ENCODE measurements at regions of chr5 and their contacts with region 1.

Region 1: GRCh38 chr5:10695055-10695649 is 65.9 kb downstream of the DAP start:
- DNase-seq: peak; percentile 61 to 85 (median 76)
- H3K4me3 ChIP-seq: peak overlapping the region in 42 of 59 donors; percentile 6 to 56 (median 38)
- H3K27ac ChIP-seq: peak overlapping the region in 5 of 59 donors; percentile 7 to 55 (median 25)
- H3K27me3 ChIP-seq: no peaks in the 10 kb centered on the region
- CTCF ChIP-seq: peak; percentile 58 to 91 (median 81)

Region 2: DNA sequence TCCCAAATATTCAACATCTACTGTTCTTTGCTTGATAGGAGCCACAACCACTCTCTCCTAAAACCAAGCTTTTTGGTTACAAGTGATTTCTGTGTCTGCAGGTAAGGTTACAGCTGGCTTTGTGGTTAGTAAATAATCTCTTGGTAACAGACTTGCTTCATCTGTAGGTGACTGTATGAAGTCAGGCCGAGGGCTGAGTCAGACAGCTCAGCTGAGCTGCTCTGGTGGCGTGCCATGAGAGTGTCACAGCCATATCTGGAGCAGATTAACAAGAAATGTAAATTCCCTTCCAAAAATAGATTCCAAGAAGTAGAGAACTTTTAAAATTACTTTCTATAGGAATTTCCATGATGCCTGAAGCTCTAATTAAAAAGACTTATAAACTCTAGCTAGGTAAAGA is 1041.3 kb before region 1 on chr5:
- intact Hi-C with region 1: no loop called
- DNase-seq: peak in 8 of 10 donors; percentile 22 to 75 (median 51)
- H3K4me3 ChIP-seq: no peak overlapping the region
- H3K27ac ChIP-seq: no peak overlapping the region
- H3K27me3 ChIP-seq: no peaks in the 10 kb centered on the region
- CTCF ChIP-seq: no peak

Region 3: DNA sequence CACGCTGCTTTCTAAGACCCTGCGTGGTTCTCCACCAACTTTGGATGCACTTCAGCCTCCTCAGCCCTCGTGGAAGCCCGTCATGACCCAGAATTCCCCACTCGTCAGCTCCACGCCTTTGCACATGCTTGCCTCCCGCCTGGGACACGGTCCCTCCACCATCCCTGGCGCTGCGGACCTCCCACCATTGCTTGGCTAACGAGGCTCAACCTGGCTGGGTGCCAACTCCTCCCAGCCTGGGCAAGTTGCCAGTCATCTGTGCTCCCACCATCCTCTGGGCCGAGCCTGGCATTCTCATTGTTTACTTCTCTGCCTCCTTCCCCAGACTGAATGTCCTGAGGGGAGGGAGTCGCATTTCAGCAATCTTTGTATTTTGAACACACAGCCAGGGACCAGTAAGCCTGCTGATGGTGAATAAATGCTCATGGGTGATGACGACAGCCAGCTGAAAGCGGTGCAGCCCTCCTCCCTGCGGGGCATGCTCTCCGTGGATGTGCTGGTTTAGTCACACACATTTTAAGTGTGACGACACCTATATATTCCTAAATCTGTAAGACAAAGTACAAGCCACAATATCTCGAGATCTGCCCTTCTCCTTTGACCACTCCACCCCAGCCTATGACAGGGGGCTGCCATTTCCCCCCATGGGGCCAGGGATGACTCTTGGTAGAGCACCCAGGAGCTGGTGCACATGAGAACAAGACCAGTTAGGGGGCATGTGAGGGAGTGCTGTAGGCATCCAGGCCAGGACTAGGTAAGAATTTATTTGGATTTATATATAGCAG is 93.7 kb before region 1 on chr5:
- intact Hi-C with region 1: no loop called
- DNase-seq: peak; percentile 75 to 90 (median 84)
- H3K4me3 ChIP-seq: peak overlapping the region in 49 of 59 donors; percentile 1 to 56 (median 28)
- H3K27ac ChIP-seq: peak overlapping the region; percentile 29 to 94 (median 87)
- H3K27me3 ChIP-seq: no peaks in the 10 kb centered on the region
- CTCF ChIP-seq: peak in 10 of 56 donors; percentile 6 to 25 (median 10)

Region 4: DNA sequence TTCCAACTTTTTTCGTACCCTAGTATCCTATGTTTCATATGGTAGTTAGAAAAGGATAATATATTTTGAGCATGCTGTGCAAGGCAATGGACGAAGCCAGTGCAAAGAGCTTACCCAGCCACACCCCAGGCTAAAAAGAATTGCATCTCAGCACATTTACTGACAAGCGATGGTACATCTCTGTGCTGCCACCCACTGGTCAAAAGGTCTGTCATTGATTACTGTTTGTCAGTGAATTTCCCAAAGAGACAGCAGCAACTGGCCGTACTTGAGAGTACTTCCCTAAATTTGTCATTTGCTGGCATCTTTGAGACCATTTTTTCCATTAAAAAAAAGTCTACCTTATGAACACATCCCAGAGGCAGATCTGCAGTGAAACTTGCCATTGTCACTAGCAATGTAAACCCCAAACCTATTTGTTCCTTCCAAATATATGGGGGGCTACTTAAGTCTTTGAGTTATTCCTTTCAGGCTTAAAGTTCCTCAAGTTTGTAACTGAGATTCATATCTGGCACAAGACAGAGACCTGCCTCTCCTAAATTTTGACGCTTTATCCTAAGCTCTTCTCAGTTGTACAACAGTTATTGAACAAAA is 1024.8 kb after region 1 on chr5:
- intact Hi-C with region 1: loop called in 1 of 2 experiments (anchors 10 kb)
- DNase-seq: peak in 9 of 10 donors; percentile 34 to 91 (median 59)
- H3K4me3 ChIP-seq: no peak overlapping the region
- H3K27ac ChIP-seq: peak overlapping the region in 1 of 59 donors; percentile 9
- H3K27me3 ChIP-seq: no peaks in the 10 kb centered on the region
- CTCF ChIP-seq: peak; percentile 38 to 81 (median 67)

Region 5: DNA sequence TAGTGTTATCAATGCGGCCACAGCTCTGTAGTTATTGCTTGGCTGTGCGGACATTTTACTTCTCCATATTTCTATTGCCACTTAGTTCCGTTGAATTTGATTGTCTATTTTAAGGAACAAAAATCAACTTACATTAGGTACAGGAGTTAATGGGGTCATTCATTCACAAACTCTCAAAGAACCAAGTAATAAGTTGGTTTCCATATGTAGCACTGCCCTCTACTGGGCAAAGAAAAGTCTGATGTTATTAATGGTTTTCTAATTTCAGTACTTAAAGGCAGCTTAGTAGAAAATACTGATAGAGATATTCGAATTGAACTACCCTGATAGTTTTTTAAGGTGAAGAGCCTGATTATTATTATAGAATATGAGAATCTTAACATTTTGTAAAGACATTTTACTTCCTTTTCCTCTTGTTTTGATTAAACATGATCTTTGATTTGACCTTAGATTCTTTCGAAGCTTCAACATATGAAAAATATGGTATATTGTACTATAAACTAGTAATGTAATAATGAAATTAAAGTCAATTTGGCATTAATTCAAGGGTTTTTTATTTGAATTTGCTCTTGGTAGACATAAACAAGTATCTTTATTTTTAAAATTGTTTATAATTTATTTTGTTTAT is 1328.6 kb after region 1 on chr5:
- intact Hi-C with region 1: loop called (anchors 5 to 10 kb)
- DNase-seq: no peak
- H3K4me3 ChIP-seq: no peak overlapping the region
- H3K27ac ChIP-seq: no peak overlapping the region
- H3K27me3 ChIP-seq: no peaks in the 10 kb centered on the region
- CTCF ChIP-seq: peak; percentile 48 to 84 (median 71)

Measured in dorsolateral prefrontal cortex (tissue), 120 donors.